BJ (cell line): ENCODE measurements at regions of chr1 and their contacts with region 1.

Region 1: GRCh38 chr1:165367375-165367993 is 11.0 kb upstream of the LMX1A start:
- DNase-seq: no peak
- H3K4me3 ChIP-seq: no peak overlapping the region
- H3K27me3 ChIP-seq: no peaks in the 10 kb centered on the region; the same call in none of the 2 replicates
- CTCF ChIP-seq: peak; percentile 95

Region 2: GRCh38 chr1:165342587-165342986 is 24.9 kb before region 1 on chr1:
- CTCF ChIA-PET with region 1: interaction called, 15 read pairs
- POLR2A ChIA-PET with region 1: no interaction called
- DNase-seq: no peak
- H3K4me3 ChIP-seq: no peak overlapping the region
- H3K27me3 ChIP-seq: peaks cover 1% of the 10 kb centered on the region
- CTCF ChIP-seq: no peak

Region 3: DNA sequence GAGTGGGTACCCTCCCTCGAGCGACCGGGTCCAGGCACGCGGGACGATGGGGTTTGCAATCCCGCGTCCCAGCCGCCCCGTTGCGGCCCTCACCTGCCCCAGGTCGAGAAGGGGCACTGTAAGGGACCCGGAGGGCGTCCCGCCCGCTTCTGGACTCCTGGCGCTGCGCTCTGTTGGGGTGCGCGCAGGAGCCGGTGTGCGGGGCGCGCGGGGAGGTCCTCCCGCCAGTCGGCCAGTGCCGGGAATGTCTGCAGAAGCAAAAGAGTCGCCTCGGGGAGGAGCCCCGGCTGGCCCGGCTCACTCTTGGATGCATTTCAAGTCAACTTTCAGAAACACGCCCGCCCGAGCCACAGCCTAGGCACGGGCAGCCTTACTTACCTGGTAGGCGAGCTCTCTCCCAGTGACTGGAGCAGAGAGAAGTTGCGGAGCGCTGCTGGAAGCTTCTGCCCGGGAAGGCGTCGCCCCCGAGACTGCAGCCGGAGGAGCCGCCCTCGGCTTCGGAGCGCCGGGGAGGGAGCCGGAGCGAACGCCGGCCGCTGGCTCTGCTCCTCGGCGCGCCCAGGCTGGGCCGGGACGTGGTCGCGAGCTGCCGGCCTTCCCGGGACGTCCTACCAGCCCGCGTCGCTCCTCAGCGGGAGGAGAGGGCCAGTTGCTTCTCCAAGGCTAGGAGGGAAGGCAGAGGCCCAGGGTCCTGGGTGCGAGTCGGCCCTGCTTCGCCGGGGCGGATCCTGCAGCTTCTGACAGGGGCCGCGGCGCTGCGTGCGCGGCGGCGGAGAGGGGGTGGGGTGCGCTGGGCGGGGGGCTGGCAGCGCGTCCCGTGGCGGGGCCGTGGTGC is 11.3 kb before region 1 on chr1 and contains the start of gene LMX1A:
- CTCF ChIA-PET with region 1: interaction called, 40 read pairs
- POLR2A ChIA-PET with region 1: no interaction called
- DNase-seq: no peak
- H3K4me3 ChIP-seq: no peak within 1 kb of the TSS
- H3K27me3 ChIP-seq: peaks cover 34% of the 10 kb centered on the region
- CTCF ChIP-seq: no peak
- polyA plus RNA-seq, gene LMX1A: not detected in 2 replicates

Region 4: GRCh38 chr1:165383067-165383466 is 15.6 kb after region 1 on chr1:
- CTCF ChIA-PET with region 1: interaction called, 48 read pairs
- POLR2A ChIA-PET with region 1: no interaction called
- DNase-seq: peak; percentile 56
- H3K4me3 ChIP-seq: no peak overlapping the region
- H3K27me3 ChIP-seq: peaks cover 8% of the 10 kb centered on the region
- CTCF ChIP-seq: no peak

Region 5: DNA sequence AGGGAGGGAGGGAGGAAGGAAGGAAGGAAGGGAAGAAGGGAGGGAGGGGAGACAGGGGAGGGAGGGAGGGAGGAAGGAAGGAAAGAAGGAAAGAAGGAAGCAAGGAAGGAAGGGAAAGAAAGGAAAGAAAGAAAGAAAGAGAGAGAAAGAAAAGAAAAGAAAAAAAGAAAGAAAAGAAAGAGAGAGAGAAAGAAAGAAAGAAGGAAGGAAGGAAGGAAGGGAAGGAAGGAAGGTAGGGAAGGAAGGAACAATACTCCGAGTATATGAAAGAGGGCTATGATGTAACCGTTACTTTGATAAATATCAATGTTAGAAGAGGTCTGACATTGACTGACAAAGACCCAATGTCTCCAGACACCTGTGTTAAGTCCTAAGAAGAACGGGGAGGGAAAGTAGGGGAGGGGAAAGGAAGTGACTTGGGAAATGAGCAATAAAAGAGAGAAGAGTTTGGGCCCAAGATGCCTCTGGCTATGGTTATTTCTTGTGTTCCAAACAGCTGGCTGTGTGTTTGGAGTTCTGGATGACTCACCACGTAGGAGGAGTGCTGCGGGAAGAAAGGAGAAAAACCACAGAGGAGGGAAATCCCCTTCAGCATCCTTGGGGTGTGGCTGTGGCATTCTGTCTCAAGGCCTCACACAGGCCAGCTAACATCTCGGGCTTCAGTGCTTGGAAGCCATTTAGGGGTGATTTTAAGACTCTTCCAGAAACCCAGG is 114.5 kb after region 1 on chr1:
- CTCF ChIA-PET with region 1: no interaction called
- POLR2A ChIA-PET with region 1: no interaction called
- DNase-seq: peak; percentile 62
- H3K4me3 ChIP-seq: no peak overlapping the region
- H3K27me3 ChIP-seq: peaks cover 3% of the 10 kb centered on the region
- CTCF ChIP-seq: no peak

Region 6: GRCh38 chr1:166069390-166069789 is 701.9 kb after region 1 on chr1:
- CTCF ChIA-PET with region 1: no interaction called
- POLR2A ChIA-PET with region 1: no interaction called
- DNase-seq: no peak
- H3K4me3 ChIP-seq: no peak overlapping the region
- H3K27me3 ChIP-seq: no peaks in the 10 kb centered on the region
- CTCF ChIP-seq: no peak